Panc1 (cell line): ENCODE measurements at regions of chr19 and their contacts with region 1.

Region 1: DNA sequence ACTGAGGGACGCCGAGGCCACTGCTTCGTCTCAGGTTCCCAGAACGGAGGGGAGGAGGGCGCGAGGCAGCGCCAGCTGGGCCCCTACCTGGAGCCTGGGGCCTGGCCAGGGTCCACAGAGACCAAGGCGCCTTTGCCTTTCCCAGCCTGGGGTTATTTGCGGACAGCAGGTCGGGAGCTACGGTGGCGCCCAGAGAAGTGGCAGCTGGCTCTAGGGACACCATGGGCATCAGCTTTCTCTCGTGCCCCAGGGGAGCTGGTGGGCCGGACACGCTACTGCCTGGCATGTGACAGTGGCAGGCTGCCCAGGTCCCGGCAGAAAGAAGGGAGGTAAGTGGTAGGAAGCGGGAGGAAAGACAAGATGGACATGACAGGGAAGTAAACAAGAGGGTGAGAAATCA is 19.0 kb downstream of the AKT2 start:
- DNase-seq: no peak
- ATAC-seq: no peak
- H3K4me3 ChIP-seq: no peak overlapping the region
- H3K27ac ChIP-seq: no peak overlapping the region
- H3K4me1 ChIP-seq: no peaks in the 10 kb centered on the region
- H3K27me3 ChIP-seq: no peaks in the 10 kb centered on the region
- CTCF ChIP-seq: no peak

Region 2: DNA sequence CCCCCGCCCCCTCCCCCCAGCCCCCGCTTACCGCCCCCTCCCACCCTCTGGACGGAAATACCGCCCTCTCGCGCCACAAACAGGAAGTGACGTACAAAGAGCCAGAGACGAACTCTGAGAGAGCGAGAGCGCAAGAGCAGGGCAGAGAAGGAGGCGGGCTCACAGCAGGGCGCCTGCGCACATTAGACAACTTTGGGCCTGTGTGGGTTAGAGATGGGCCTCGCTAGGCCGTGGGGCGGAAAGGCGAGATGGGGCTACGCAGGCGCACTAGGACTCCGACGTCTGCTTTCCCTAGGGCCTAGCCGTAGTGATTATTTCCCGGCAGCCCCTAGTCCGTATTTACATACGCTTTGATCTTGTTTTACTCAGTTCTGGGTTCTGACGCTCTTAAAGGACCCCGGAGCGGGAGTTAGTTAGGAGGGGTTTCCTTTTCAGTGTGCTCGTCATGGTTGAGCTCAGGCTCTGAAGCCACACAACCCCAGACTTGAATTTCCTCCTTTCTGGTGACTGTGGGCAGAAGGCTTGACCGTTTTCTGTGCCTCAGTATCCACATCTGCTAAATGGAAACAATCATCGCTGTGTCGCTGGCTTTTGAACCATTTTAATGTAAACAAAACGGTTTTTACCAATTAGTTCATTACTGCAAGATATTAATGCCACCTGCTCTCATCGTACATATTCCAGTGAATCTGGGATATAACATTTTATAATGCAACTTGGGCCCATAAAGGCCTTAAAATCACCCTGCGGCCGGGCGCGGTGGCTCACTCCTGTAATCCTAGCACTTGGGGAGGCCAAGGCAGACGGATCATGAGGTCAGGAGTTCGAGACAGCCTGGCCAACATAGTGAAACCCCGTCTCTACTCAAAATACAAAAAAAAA is 19.5 kb after region 1 on chr19:
- CTCF ChIA-PET with region 1: interaction called, 5 read pairs
- POLR2A ChIA-PET with region 1: interaction called, 19 read pairs
- in situ Hi-C with region 1: no loop called
- intact Hi-C with region 1: no loop called
- DNase-seq: peak; percentile 100
- ATAC-seq: peak; percentile 96
- H3K4me3 ChIP-seq: peak overlapping the region; percentile 36 to 47
- H3K27ac ChIP-seq: peak overlapping the region; percentile 89
- H3K4me1 ChIP-seq: peaks cover 51% of the 10 kb centered on the region
- H3K27me3 ChIP-seq: no peaks in the 10 kb centered on the region
- CTCF ChIP-seq: no peak

Region 3: GRCh38 chr19:40341601-40342482 is 75.7 kb after region 1 on chr19:
- CTCF ChIA-PET with region 1: interaction called, 6 read pairs
- POLR2A ChIA-PET with region 1: no interaction called
- in situ Hi-C with region 1: loop called (anchors 5 kb)
- intact Hi-C with region 1: no loop called
- DNase-seq: no peak
- ATAC-seq: peak; percentile 67
- H3K4me3 ChIP-seq: no peak overlapping the region
- H3K27ac ChIP-seq: no peak overlapping the region
- H3K4me1 ChIP-seq: no peaks in the 10 kb centered on the region
- H3K27me3 ChIP-seq: peaks cover 2% of the 10 kb centered on the region; the same call in 1 of the 2 replicates
- CTCF ChIP-seq: no peak

Region 4: DNA sequence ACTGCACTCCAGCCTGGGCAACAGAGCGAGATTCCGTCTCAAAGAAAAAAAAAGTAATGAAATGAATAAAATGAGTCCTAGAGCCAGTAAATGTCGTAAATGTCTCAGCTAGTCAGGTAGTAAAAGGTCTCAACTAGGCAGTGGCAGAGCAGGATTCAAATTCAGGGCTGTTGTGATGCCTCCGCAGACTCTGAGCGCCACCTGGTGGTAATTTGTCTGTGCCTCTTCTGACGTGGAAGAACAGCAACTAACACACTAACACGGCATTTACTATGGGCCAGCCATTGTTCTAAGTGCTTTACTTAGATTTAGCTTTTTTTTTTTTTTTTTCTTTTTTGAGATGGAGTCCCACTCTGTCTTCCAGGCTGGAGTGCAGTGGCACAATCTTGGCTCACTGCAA is 878.3 kb after region 1 on chr19:
- CTCF ChIA-PET with region 1: no interaction called
- POLR2A ChIA-PET with region 1: no interaction called
- in situ Hi-C with region 1: no loop called
- intact Hi-C with region 1: no loop called
- DNase-seq: peak; percentile 51
- ATAC-seq: peak; percentile 83; the same call in 1 of the 2 replicates
- H3K4me3 ChIP-seq: no peak overlapping the region
- H3K27ac ChIP-seq: no peak overlapping the region
- H3K4me1 ChIP-seq: no peaks in the 10 kb centered on the region
- H3K27me3 ChIP-seq: no peaks in the 10 kb centered on the region
- CTCF ChIP-seq: peak; percentile 88